Right cardiac atrium (tissue), 5 donors: ENCODE measurements at regions of chr5 and their contacts with region 1.

Region 1: GRCh38 chr5:112419986-112420864 is 1.1 kb upstream of the EPB41L4A start:
- DNase-seq: peak; percentile 89 to 95 (median 94)
- ATAC-seq: peak; percentile 93 to 95
- H3K4me3 ChIP-seq: peak overlapping the region; percentile 85
- H3K27ac ChIP-seq: peak overlapping the region; percentile 93
- H3K4me1 ChIP-seq: no peaks in the 10 kb centered on the region
- H3K27me3 ChIP-seq: no peaks in the 10 kb centered on the region

Region 2: GRCh38 chr5:112174959-112175594 is 245.1 kb before region 1 on chr5:
- intact Hi-C with region 1: loop called in 3 of 4 experiments (anchors 2 to 10 kb)
- DNase-seq: peak in 2 of 3 donors; percentile 21 to 44
- ATAC-seq: peak; percentile 71 to 78
- H3K4me3 ChIP-seq: no peak overlapping the region
- H3K27ac ChIP-seq: no peak overlapping the region
- H3K4me1 ChIP-seq: no peaks in the 10 kb centered on the region
- H3K27me3 ChIP-seq: no peaks in the 10 kb centered on the region

Region 3: GRCh38 chr5:112186401-112186990 is 233.7 kb before region 1 on chr5:
- intact Hi-C with region 1: loop called in 1 of 4 experiments (anchors 10 kb)
- DNase-seq: no peak
- ATAC-seq: no peak
- H3K4me3 ChIP-seq: no peak overlapping the region
- H3K27ac ChIP-seq: no peak overlapping the region
- H3K4me1 ChIP-seq: peaks cover 3% of the 10 kb centered on the region
- H3K27me3 ChIP-seq: no peaks in the 10 kb centered on the region

Region 4: DNA sequence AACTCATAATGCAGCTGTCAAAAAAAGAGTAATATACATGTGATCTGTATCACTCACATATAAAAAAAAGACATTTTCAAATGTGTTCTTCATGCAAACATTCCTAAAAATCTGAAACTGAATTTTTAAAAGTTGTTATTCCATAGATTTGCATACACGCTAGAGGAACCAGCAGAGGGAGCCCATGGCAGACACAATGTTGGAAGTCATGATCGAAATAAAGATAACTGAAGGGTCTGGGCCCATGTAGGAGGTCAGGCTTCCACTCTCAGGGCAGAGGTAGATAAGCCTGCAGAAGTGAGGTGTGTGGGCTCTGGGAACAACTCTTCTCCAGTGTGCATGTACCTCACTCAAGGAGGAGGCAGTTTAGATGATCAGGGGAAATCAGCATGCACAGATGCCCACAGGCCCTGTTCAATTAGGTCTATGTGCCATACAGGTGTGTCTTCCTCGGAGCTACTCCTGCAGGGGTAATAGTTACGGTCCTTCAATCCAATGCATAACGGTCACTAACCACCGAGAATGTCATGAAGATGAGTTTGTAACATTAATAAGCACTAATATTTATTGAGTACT is 209.7 kb before region 1 on chr5:
- intact Hi-C with region 1: loop called in 3 of 4 experiments (anchors 2 to 10 kb)
- DNase-seq: peak in 2 of 3 donors; percentile 37 to 67
- ATAC-seq: peak; percentile 53 to 57
- H3K4me3 ChIP-seq: no peak overlapping the region
- H3K27ac ChIP-seq: no peak overlapping the region
- H3K4me1 ChIP-seq: peaks cover 1% of the 10 kb centered on the region
- H3K27me3 ChIP-seq: no peaks in the 10 kb centered on the region

Region 5: GRCh38 chr5:112253478-112254250 is 166.6 kb before region 1 on chr5:
- intact Hi-C with region 1: loop called in 1 of 4 experiments (anchors 10 kb)
- DNase-seq: peak in 2 of 3 donors; percentile 49 to 63
- ATAC-seq: peak; percentile 94 to 96
- H3K4me3 ChIP-seq: no peak overlapping the region
- H3K27ac ChIP-seq: no peak overlapping the region
- H3K4me1 ChIP-seq: peaks cover 5% of the 10 kb centered on the region
- H3K27me3 ChIP-seq: no peaks in the 10 kb centered on the region

Region 6: DNA sequence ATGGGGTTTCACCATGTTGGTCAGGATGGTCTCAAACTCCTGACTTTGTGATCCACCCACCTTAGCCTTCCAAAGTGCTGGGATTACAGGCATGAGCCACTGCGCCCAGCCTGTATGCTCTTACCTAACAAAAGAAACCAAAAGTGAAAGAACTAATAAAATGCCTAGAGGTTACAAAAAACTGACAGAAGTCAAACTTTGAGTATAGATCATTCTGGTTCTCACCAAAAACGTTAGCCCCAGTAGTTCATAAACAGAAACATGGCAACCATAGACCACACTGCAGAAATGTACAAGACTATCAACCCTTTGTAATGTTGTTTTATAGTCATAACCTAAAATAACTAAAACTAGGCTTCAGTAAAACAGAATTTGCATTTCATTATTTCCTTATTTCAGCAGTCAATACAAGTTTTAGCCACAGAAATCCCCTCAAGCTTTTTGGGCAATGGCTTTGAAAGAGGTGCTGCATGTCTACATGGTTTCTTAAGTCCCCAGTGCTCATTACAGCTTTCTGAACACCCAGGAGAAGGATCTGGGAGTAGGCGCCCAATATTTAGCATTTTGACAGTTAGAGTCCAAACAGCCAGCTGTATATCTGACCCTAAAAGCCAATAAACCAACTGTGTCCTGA is 73.7 kb before region 1 on chr5:
- intact Hi-C with region 1: loop called in 1 of 4 experiments (anchors 10 kb)
- DNase-seq: no peak
- ATAC-seq: no peak
- H3K4me3 ChIP-seq: no peak overlapping the region
- H3K27ac ChIP-seq: no peak overlapping the region
- H3K4me1 ChIP-seq: peaks cover 7% of the 10 kb centered on the region
- H3K27me3 ChIP-seq: no peaks in the 10 kb centered on the region